MCF 10A (cell line): ENCODE measurements at regions of chr14 and their contacts with region 1.

Region 1: DNA sequence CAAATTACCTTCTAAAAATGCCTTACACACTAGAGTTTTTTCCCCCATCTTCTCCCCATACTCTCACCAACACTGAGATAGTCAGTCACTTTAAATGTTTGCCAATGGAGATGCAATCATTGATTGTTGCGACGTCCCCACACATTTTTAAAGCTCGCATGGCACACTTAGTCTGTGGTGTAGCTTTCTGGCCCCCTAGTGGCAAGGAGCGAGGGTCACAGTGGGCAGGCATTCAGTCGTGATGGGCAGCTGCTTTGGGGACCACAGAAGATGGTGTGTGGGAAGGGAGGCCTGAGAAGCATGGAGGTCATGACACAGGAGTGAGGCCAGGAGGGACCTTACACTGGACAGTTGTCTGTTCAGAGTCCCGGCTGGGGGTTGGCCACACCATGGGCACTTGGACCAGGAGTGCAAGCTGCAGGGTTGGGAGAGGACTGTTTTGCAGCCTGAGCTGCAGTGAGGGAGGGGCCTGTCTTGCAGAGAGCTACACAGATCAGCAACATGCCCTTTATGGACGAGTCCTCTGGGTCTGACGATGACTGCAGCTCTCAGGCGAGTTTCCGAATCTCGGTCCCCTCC is 28.7 kb downstream of the PIGH start:
- DNase-seq: peak; percentile 69
- H3K4me3 Mint-ChIP-seq: no peak overlapping the region
- H3K27ac Mint-ChIP-seq: no peak overlapping the region
- H3K4me1 Mint-ChIP-seq: peaks cover 12% of the 10 kb centered on the region
- H3K27me3 Mint-ChIP-seq: no peaks in the 10 kb centered on the region
- CTCF ChIP-seq: peak; percentile 85

Region 2: GRCh38 chr14:67411820-67412421 is 159.4 kb before region 1 on chr14 and contains the start of gene PLEK2:
- CTCF ChIA-PET with region 1: interaction called, 15 read pairs
- POLR2A ChIA-PET with region 1: no interaction called
- intact Hi-C with region 1: no loop called
- DNase-seq: peak; percentile 81
- H3K4me3 Mint-ChIP-seq: peak within 1 kb of the TSS; percentile 84
- H3K27ac Mint-ChIP-seq: peak within 1 kb of the TSS; percentile 63
- H3K4me1 Mint-ChIP-seq: peaks cover 24% of the 10 kb centered on the region
- H3K27me3 Mint-ChIP-seq: no peaks in the 10 kb centered on the region
- CTCF ChIP-seq: no peak
- total RNA-seq, gene PLEK2: 22.4 and 39.9 TPM in 2 replicates

Region 3: GRCh38 chr14:67483277-67483896 is 88.0 kb before region 1 on chr14:
- CTCF ChIA-PET with region 1: interaction called, 10 read pairs
- POLR2A ChIA-PET with region 1: no interaction called
- intact Hi-C with region 1: no loop called
- DNase-seq: no peak
- H3K4me3 Mint-ChIP-seq: no peak overlapping the region
- H3K27ac Mint-ChIP-seq: no peak overlapping the region
- H3K4me1 Mint-ChIP-seq: no peaks in the 10 kb centered on the region
- H3K27me3 Mint-ChIP-seq: no peaks in the 10 kb centered on the region
- CTCF ChIP-seq: no peak

Region 4: DNA sequence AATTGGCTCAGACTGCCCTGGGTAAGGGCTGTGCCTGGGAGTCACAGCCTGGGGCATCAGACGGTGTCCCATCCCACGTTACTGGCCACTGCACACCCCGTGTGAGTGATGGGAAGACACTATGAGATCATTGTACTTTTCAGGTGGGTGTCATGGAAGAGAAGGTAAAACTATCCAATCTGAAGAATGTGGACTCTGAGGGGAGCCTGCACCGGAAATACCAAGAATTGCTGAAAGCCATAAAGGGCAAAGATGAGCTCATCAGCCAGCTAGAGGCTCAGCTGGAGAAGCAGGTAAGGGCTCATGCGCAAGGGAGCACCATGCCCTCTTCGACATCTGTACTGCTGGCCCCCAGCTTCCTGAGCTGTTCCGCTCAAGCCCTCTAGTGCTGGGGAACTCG is 14.2 kb before region 1 on chr14:
- CTCF ChIA-PET with region 1: interaction called, 19 read pairs
- POLR2A ChIA-PET with region 1: interaction called, 5 read pairs
- intact Hi-C with region 1: no loop called
- DNase-seq: peak; percentile 26
- H3K4me3 Mint-ChIP-seq: no peak overlapping the region
- H3K27ac Mint-ChIP-seq: no peak overlapping the region
- H3K4me1 Mint-ChIP-seq: peaks cover 12% of the 10 kb centered on the region
- H3K27me3 Mint-ChIP-seq: no peaks in the 10 kb centered on the region
- CTCF ChIP-seq: no peak

Region 5: GRCh38 chr14:67599698-67600561 is 28.6 kb after region 1 on chr14 and contains the start of gene PIGH:
- CTCF ChIA-PET with region 1: interaction called, 10 read pairs
- POLR2A ChIA-PET with region 1: no interaction called
- intact Hi-C with region 1: no loop called
- DNase-seq: peak; percentile 81
- H3K4me3 Mint-ChIP-seq: peak within 1 kb of the TSS; percentile 96
- H3K27ac Mint-ChIP-seq: peak within 1 kb of the TSS; percentile 79
- H3K4me1 Mint-ChIP-seq: peaks cover 13% of the 10 kb centered on the region
- H3K27me3 Mint-ChIP-seq: no peaks in the 10 kb centered on the region
- CTCF ChIP-seq: peak; percentile 60
- total RNA-seq, gene PIGH: 13.8 and 18.9 TPM in 2 replicates

Region 6: DNA sequence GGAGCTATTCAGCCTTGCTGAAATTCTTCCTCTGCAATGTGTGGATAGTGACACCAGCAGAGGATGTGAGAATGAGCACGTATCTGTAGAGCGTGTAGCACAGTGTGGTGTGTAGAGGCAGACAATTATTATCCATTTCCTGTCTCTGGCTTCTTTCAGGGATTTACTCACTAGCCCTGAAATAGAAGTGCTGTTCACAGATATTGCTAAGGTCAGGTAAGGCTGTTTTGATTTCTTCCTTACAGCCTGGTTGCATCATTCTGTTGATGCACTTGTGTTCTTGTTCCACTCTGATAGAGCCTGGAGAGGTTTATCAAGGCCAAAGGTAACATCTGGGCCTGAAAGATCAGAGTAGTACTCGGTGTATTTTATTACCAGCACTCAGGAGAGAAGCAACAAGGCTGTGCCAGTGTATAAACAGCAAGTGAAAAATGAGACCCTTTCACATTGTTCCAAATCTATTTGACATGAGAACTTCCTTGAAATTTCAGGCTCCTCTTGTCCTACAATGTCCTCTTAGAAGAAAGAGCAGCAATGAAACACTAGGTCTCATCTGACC is 65.1 kb after region 1 on chr14:
- CTCF ChIA-PET with region 1: no interaction called
- POLR2A ChIA-PET with region 1: no interaction called
- intact Hi-C with region 1: no loop called
- DNase-seq: no peak
- H3K4me3 Mint-ChIP-seq: no peak overlapping the region
- H3K27ac Mint-ChIP-seq: peak overlapping the region; percentile 19
- H3K4me1 Mint-ChIP-seq: peaks cover 8% of the 10 kb centered on the region
- H3K27me3 Mint-ChIP-seq: no peaks in the 10 kb centered on the region
- CTCF ChIP-seq: no peak

Region 7: DNA sequence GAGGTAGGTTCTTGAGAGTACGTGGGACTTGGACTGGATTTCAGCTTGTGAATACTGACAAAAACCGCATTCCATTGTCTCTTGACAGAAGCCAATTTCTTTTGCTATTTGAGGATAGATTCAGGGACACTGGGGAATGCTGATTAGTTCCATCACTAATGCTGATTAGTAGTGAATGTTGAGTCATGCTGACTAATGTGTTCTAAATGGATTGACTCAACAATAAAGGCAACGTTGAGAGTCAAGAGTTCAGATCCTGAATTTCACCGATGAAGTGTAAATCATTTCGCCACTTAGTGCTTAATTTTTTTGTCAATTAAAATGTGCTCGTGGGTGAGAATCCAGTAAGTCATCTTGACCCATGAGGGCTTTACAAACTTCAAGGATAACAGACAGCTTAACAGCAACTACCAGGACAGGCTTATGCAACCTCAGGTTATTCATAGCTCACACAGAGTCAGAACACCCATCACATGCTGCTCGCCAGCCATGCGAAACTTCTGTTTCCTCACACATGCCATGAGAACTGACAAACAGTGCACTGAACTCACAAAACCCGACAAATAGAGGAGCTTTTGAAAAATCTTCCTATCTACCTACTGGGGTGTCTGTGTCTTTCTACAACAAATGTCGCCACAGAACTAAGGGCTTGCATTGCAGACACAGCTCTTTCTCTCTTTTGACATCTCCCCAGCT is 905.0 kb after region 1 on chr14:
- CTCF ChIA-PET with region 1: no interaction called
- POLR2A ChIA-PET with region 1: no interaction called
- intact Hi-C with region 1: no loop called
- DNase-seq: peak; percentile 90
- H3K4me3 Mint-ChIP-seq: peak overlapping the region; percentile 0
- H3K27ac Mint-ChIP-seq: peak overlapping the region; percentile 92
- H3K4me1 Mint-ChIP-seq: peaks cover 42% of the 10 kb centered on the region
- H3K27me3 Mint-ChIP-seq: no peaks in the 10 kb centered on the region
- CTCF ChIP-seq: no peak